Activated naive CD4-positive, alpha-beta T cell treated with anti-CD3 and anti-CD28 coated beads for 36 hours (primary cell): ENCODE measurements at regions of chr2 and their contacts with region 1.

Region 1: GRCh38 chr2:64914735-64915509 is 74.3 kb upstream of the SLC1A4 start:
- DNase-seq: no peak
- H3K4me3 Mint-ChIP-seq: no peak overlapping the region
- H3K27ac Mint-ChIP-seq: no peak overlapping the region
- H3K4me1 Mint-ChIP-seq: peaks cover 14% of the 10 kb centered on the region
- H3K27me3 Mint-ChIP-seq: no peaks in the 10 kb centered on the region

Region 2: GRCh38 chr2:64931246-64932115 is 16.6 kb after region 1 on chr2:
- CTCF ChIA-PET with region 1: no interaction called
- intact Hi-C with region 1: no loop called
- DNase-seq: no peak
- H3K4me3 Mint-ChIP-seq: no peak overlapping the region
- H3K27ac Mint-ChIP-seq: no peak overlapping the region
- H3K4me1 Mint-ChIP-seq: no peaks in the 10 kb centered on the region
- H3K27me3 Mint-ChIP-seq: peaks cover 2% of the 10 kb centered on the region

Region 3: DNA sequence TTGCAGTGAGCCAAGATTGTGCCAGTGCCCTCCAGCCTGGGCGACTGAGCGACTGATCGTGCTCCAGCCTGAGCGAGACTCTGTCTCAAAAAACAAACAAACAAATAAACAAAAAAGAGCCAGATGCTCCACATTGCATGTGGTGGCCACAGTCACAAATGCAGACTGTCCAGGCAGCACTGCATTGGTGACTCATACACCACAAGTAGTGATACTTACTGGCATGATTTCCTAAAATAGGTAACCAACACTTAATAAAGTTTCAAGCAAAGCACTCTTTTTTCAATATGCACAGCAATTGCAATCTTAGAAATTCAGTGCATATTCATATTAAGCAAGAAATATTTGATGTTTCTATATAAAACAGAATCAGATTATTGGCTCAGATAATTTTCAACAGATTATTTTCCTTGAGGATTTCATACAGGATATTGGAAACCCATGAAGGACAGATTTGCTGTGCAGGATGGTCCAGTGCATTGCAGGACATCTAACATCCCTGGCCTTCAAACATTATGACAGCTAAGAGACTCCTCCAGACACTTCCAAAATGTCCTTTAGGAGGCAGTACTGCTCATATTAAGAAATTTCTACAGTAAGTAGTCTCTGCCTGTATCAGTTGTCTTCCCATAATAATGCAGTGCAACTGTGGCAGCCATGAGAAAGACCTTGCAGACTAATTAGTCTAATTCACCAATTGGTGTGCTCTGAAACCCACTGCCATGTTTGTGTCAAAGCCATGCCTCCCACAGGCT is 63.8 kb after region 1 on chr2:
- CTCF ChIA-PET with region 1: interaction called, 4 read pairs
- intact Hi-C with region 1: loop called (anchors 1 kb)
- DNase-seq: no peak
- H3K4me3 Mint-ChIP-seq: no peak overlapping the region
- H3K27ac Mint-ChIP-seq: no peak overlapping the region
- H3K4me1 Mint-ChIP-seq: peaks cover 13% of the 10 kb centered on the region
- H3K27me3 Mint-ChIP-seq: no peaks in the 10 kb centered on the region

Region 4: DNA sequence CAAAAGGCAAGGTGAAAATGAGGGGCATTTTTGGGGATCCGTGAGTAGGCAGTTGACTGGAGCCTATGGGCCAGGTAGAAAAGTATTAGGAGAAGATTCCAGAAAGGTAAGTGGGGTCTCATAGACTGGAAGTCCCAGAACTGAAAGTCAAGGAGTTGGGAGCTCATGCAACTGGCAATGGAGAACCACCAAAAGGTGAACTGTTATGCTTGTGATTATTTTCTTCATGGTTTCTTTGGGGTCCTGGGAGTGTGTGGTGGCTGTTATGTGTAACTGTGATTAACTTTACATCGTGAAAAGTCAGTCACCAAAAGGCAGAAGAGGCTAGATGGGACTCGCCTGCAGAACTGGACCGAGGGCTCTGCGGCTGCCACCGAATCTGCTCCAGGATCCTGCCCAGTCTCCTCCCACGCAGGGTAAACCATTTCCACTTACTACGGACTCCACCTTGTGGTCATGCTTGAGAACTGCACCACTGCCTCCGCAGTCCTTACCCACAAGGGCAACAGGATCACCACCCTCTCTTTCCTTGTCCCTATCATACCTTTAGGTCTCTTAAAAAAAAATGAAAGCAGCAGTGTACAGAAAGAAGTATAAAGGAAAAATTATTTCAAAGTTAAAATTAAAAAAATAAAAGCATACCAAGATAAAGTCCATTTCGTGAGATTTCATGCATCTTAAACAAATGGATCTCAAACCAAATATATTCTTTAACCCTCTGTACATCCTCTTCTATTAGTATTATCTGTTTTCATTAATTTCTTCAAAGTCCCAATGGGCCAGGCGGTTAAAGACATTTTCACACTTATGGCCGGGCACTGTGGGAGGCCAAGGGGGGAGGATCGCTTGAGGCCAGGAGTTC is 125.7 kb after region 1 on chr2:
- CTCF ChIA-PET with region 1: interaction called, 77 read pairs
- intact Hi-C with region 1: loop called (anchors 1 kb)
- DNase-seq: peak; percentile 88
- H3K4me3 Mint-ChIP-seq: no peak overlapping the region
- H3K27ac Mint-ChIP-seq: no peak overlapping the region
- H3K4me1 Mint-ChIP-seq: peaks cover 7% of the 10 kb centered on the region
- H3K27me3 Mint-ChIP-seq: no peaks in the 10 kb centered on the region

Region 5: DNA sequence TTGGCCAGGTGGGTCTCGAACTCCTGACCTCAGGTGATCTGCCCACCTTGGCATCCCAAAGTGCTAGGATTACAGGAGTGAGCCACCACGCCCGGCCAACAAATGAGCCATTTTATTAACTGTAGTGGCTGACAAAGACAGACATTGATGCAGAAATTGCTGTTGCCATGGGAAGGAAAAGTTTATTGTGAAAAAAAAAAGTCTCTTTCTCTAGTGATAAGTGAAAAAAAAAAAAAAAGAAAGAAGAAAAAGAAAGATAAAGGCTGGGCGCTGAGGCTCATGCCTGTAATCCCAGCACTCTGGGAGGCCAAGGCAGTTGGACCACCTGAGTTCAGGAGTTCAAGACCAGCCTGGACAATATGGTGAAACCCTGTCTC is 254.8 kb after region 1 on chr2:
- CTCF ChIA-PET with region 1: interaction called, 15 read pairs
- intact Hi-C with region 1: loop called (anchors 1 kb)
- DNase-seq: no peak
- H3K4me3 Mint-ChIP-seq: no peak overlapping the region
- H3K27ac Mint-ChIP-seq: no peak overlapping the region
- H3K4me1 Mint-ChIP-seq: no peaks in the 10 kb centered on the region
- H3K27me3 Mint-ChIP-seq: no peaks in the 10 kb centered on the region

Region 6: DNA sequence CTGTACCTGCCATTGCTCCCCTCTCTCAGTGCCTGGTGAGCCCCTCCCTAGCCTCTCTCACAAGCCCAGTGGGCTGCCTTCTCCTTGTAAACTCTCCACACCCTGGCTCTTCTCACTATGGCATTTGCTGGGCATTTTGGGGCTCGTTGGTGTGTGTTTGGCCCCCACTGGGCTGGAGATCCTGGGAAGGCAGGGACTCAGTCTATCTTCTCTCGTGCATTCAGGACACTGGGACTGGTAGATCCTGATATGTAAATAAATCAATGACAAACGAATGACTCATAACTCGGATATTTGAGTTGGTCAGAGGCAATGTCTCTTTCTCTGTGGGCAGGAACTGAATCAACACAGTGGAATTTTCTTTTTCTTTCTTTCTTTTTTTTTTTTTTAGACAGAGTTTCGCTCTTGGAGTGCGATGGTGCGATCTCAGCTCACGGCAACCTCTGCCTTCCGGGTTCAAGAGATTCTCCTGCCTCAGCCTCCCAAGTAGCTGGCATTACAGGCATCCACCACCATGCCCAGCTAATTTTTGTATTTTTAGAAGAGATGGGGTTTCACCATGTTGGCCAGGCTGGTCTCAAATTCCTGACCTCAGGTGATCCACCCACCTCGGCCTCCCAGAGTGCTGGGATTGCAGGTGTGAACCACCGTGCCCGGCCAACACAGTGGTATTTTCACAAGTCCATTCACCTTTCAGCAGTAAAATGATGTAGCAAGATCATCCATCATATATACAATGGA is 662.1 kb after region 1 on chr2:
- CTCF ChIA-PET with region 1: no interaction called
- intact Hi-C with region 1: loop called (anchors 1 kb)
- DNase-seq: no peak
- H3K4me3 Mint-ChIP-seq: no peak overlapping the region
- H3K27ac Mint-ChIP-seq: no peak overlapping the region
- H3K4me1 Mint-ChIP-seq: peaks cover 2% of the 10 kb centered on the region
- H3K27me3 Mint-ChIP-seq: peaks cover 3% of the 10 kb centered on the region